ENCODE measurements at regions of chr12 and their contacts with region 1.

Region 1: DNA sequence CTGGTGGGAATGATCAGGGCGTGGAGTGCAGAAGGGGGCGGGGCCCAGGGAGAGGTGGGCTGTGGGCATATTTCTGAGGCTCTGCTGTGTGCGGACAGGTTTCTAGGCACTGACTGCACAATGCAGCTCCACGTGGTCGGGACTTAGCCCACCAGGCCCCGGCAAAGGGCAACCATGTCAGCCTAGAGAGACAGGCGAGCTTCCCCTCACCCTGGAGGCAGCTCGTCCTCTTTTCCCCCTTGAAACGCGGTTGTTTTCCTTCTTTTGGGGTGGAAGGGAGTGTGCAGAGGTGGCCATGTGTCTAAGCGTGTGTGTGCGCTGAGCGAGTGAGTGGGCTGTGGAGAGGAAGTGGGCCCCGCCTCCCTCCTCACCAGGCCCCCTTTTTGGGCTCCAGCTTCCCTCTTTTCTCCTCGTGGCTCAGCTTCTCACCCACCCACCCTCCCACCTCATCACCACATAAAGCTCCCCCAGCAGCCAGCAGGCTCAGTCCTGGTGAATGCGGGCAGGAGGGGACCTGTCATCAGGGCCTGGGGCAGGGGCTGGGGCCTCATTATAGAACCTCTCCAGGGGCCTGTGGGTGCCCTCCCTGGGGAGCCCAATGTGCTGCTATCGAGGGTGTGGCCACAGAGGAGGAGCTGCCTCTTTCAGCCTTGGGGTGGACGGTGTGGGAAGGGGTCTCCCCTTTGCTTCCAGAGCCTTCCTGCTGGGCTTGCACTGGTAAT is 22.0 kb downstream of the LRTM2 start:
- DNase-seq: no peak
- ATAC-seq: no peak
- H3K4me3 ChIP-seq: no peak overlapping the region
- H3K27ac ChIP-seq: no peak overlapping the region
- H3K4me1 ChIP-seq: peaks cover 42% of the 10 kb centered on the region
- H3K27me3 ChIP-seq: peaks cover 8 to 35% of the 10 kb centered on the region in 2 experiments
- CTCF ChIP-seq: no peak
- EP300 ChIP-seq: no peak
- POLR2A ChIP-seq: no peak
- RAD21 ChIP-seq: no peak

Region 2: GRCh38 chr12:1162081-1162760 is 680.1 kb before region 1 on chr12:
- CTCF ChIA-PET with region 1: no interaction called
- POLR2A ChIA-PET with region 1: no interaction called
- in situ Hi-C with region 1: no loop called
- intact Hi-C with region 1: no loop called
- DNase-seq: no peak
- ATAC-seq: no peak
- H3K4me3 ChIP-seq: no peak overlapping the region
- H3K27ac ChIP-seq: no peak overlapping the region
- H3K4me1 ChIP-seq: no peaks in the 10 kb centered on the region
- H3K27me3 ChIP-seq: no peaks in the 10 kb centered on the region
- CTCF ChIP-seq: no peak
- EP300 ChIP-seq: no peak
- POLR2A ChIP-seq: no peak
- RAD21 ChIP-seq: no peak

Region 3: DNA sequence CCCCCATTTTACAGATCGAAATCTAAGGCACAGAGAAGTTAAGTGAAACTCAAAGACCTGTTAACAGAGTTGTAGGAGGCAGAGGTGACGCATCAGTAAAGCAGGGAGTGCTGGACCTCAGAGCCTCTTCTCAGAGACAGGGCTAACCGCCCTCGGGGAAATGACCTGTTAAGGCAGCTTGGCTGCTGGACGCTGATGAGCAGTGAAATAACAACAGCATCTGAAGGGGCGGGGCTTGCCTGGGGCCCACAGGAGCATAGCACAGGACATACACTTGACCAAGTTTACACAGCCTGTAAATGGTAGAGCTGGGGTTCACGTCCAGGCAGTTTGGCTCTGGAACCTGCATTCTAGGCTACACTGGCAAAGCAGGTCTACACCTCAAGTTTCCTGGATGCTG is 17.3 kb after region 1 on chr12:
- CTCF ChIA-PET with region 1: no interaction called
- POLR2A ChIA-PET with region 1: no interaction called
- in situ Hi-C with region 1: no loop called
- intact Hi-C with region 1: loop called (anchors 1 kb)
- DNase-seq: no peak
- ATAC-seq: no peak
- H3K4me3 ChIP-seq: no peak overlapping the region
- H3K27ac ChIP-seq: no peak overlapping the region
- H3K4me1 ChIP-seq: 0 out of 2 replicates have a peak, but pooled peaks cover 9% of the 10 kb centered on the region
- H3K27me3 ChIP-seq: peaks cover 2 to 37% of the 10 kb centered on the region in 2 experiments; a peak in 3 of 5 replicates
- CTCF ChIP-seq: no peak
- EP300 ChIP-seq: no peak
- POLR2A ChIP-seq: no peak
- RAD21 ChIP-seq: no peak

Measured in HepG2 (cell line).